ENCODE measurements at regions of chr3 and their contacts with region 1.

Region 1: DNA sequence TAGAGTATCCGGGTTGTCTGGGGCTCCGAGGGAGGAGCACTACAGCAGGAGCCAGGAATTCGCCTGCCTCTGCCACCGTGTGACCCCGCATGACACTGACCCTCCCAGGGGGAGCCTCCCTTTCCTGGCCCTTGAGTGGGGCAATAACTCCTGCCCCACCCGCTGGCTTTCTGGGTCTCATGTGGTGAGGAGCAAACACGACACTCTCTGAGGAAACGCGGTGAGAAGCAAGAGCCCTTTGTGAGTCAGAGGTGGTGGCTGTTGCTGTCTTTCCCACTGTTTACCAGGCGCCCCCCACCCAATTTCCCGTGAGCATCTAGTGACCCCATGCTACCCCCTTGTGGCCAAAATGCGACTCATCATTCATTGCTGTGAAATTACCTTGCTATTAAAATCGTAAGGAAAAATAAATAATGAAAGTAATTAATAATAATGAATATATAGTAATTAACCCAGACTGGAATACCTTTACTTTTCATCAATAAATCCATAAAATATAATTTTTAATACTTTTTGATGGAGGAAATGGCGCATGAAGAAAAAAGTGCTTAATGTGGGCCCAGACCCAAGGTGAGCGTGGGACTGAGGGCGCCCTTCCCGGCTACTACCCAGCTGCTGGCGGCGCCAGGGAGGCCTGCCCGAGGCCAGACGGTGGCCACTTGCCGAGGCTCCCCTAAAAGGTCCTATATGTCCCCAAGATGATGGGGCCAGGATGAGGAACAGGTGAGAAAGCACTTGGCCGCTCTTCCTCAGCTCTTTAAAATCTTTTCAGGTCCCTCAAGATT is 29.3 kb downstream of the CCNL1 start:
- DNase-seq: peak; percentile 72
- H3K4me3 Mint-ChIP-seq: peak overlapping the region; percentile 59
- H3K27ac Mint-ChIP-seq: peak overlapping the region; percentile 90
- H3K4me1 Mint-ChIP-seq: peaks cover 84% of the 10 kb centered on the region
- H3K27me3 Mint-ChIP-seq: no peaks in the 10 kb centered on the region

Region 2: DNA sequence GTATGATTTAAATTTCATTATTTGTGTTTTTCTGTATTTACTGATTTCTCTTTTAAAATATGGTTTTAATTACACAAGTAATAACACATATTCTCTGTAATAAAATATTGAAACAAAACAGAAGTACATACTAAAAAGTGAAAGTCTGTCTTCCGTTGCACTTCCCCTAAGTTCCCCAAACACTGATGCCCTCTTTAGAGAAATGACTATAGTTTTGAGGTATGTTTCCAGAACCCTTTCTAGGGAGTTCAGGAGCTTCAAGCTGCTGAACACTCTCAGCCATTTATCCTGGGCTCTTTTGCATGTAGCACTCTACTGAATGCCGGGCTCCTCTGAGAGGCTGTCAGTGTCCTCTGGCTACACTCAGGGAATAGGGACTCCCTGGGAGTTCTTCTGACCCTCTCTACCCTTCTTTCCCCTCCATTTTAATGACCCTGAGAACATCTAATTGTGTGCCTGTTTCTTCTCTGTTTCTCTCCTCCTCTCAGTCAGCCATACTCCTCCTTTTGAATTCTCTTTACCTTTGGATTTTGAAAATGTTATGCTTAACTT is 1070.6 kb before region 1 on chr3:
- intact Hi-C with region 1: no loop called
- DNase-seq: no peak
- H3K4me3 Mint-ChIP-seq: no peak overlapping the region
- H3K27ac Mint-ChIP-seq: no peak overlapping the region
- H3K4me1 Mint-ChIP-seq: no peaks in the 10 kb centered on the region
- H3K27me3 Mint-ChIP-seq: peaks cover 17% of the 10 kb centered on the region

Region 3: DNA sequence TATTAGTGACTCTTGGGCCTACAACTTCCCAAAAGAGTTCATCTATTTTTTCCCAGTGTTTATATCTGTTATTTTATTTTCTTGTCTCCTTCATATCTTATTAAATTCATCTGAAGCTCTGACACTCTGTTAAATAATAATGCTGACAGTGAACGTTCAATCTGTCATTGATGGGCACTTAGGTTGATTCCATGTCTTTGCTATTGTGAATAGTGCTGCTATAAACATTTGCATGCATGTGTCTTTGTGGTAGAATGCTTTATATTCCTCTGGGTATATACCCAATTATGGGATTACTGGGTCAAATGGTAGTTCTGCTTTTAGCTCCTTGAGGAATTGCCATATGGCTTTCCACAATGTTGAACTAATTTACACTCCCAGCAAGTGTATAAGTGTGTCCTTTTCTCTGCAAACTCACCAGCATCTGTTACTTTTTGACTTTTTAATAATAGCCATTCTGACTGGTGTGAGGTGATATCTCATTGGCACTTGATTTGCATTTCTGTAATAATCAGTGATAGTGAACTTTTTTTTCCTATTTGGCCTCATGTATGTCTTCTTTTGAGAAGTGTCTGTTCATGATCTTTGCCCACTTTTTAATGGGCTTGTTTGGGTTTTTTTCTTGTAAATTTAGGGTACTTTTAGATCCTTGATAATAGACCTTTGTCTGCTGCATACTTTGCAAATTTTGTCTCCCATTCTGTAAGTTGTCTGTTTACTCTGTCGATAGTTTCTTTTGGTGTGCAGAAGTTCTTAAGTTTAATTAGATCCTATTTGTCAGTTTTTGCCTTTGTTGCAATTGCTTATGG is 182.1 kb before region 1 on chr3:
- intact Hi-C with region 1: loop called (anchors 10 kb)
- DNase-seq: no peak
- H3K4me3 Mint-ChIP-seq: no peak overlapping the region
- H3K27ac Mint-ChIP-seq: no peak overlapping the region
- H3K4me1 Mint-ChIP-seq: no peaks in the 10 kb centered on the region
- H3K27me3 Mint-ChIP-seq: peaks cover 25% of the 10 kb centered on the region

Region 4: DNA sequence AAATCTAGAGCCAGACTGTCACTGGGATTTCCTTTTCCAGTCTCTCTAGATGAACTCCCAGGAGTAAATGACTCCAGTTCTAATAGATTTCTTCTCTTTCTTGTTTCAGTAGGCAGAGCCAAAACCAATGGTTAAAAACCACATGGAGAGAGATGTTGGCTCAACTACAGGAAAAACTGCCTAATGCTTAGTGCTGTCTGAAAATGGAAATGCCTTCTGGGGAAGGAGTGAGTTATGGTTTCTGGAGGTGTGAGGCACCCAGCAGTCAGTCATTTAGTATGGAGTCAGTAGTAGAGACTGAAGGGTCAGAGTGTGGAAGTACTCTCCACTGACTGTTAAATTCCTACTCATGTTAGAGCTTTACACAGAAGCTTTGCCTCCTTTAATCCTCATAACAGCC is 107.4 kb before region 1 on chr3:
- intact Hi-C with region 1: loop called (anchors 10 kb)
- DNase-seq: no peak
- H3K4me3 Mint-ChIP-seq: no peak overlapping the region
- H3K27ac Mint-ChIP-seq: no peak overlapping the region
- H3K4me1 Mint-ChIP-seq: no peaks in the 10 kb centered on the region
- H3K27me3 Mint-ChIP-seq: peaks cover 8% of the 10 kb centered on the region

Region 5: GRCh38 chr3:157081681-157082210 is 48.9 kb before region 1 on chr3:
- intact Hi-C with region 1: loop called (anchors 1 kb)
- DNase-seq: peak; percentile 73
- H3K4me3 Mint-ChIP-seq: no peak overlapping the region
- H3K27ac Mint-ChIP-seq: no peak overlapping the region
- H3K4me1 Mint-ChIP-seq: peaks cover 46% of the 10 kb centered on the region
- H3K27me3 Mint-ChIP-seq: no peaks in the 10 kb centered on the region

Region 6: GRCh38 chr3:157103280-157103679 is 27.4 kb before region 1 on chr3:
- intact Hi-C with region 1: loop called (anchors 1 kb)
- DNase-seq: no peak
- H3K4me3 Mint-ChIP-seq: peak overlapping the region; percentile 67
- H3K27ac Mint-ChIP-seq: peak overlapping the region; percentile 87
- H3K4me1 Mint-ChIP-seq: peaks cover 72% of the 10 kb centered on the region
- H3K27me3 Mint-ChIP-seq: no peaks in the 10 kb centered on the region

Region 7: GRCh38 chr3:157115069-157116006 is 15.3 kb before region 1 on chr3:
- intact Hi-C with region 1: loop called (anchors 2 kb)
- DNase-seq: no peak
- H3K4me3 Mint-ChIP-seq: no peak overlapping the region
- H3K27ac Mint-ChIP-seq: no peak overlapping the region
- H3K4me1 Mint-ChIP-seq: peaks cover 18% of the 10 kb centered on the region
- H3K27me3 Mint-ChIP-seq: no peaks in the 10 kb centered on the region

Measured in activated T-helper 1 cell treated with anti-CD3 and anti-CD28 coated beads, Interleukin-12 subunit alpha, Interleukin-12 subunit beta, Interleukin-2, Interleukin-4 antibody, amounts not matched to agents 30 ng/mL and 10 ng/mL and 1 ng/mL, durations not matched to agents 14 hours and 24 hours and 36 hours (primary cell).